ENCODE measurements at regions of chr19 and their contacts with region 1.

Region 1: GRCh38 chr19:13093407-13094105 is 9.1 kb downstream of the LYL1 start:
- DNase-seq: peak; percentile 76 to 82 (median 78)
- H3K4me3 ChIP-seq: no peak overlapping the region
- H3K4me3 Mint-ChIP-seq: peak overlapping the region in 2 of 8 donors; percentile 33 to 64
- H3K27ac ChIP-seq: no peak overlapping the region
- H3K27ac Mint-ChIP-seq: peak overlapping the region in 4 of 7 donors; percentile 24 to 68 (median 36)
- H3K4me1 ChIP-seq: peaks cover 38% of the 10 kb centered on the region
- H3K4me1 Mint-ChIP-seq: peaks cover 11 to 37% (median 18%) of the 10 kb centered on the region in 4 donors
- H3K27me3 ChIP-seq: peaks cover 15% of the 10 kb centered on the region
- H3K27me3 Mint-ChIP-seq: peaks cover 5 to 9% of the 10 kb centered on the region in 2 donors

Region 2: GRCh38 chr19:13033819-13034611 is 59.5 kb before region 1 on chr19:
- CTCF ChIA-PET with region 1: interaction called, 3 read pairs
- POLR2A ChIA-PET with region 1: no interaction called
- intact Hi-C with region 1: loop called (anchors 5 kb)
- DNase-seq: peak in 1 of 5 donors; percentile 25
- H3K4me3 ChIP-seq: no peak overlapping the region
- H3K4me3 Mint-ChIP-seq: no peak overlapping the region
- H3K27ac ChIP-seq: no peak overlapping the region
- H3K27ac Mint-ChIP-seq: no peak overlapping the region
- H3K4me1 ChIP-seq: no peaks in the 10 kb centered on the region
- H3K4me1 Mint-ChIP-seq: peaks cover 0 to 1% (median 0%) of the 10 kb centered on the region in 4 donors
- H3K27me3 ChIP-seq: no peaks in the 10 kb centered on the region
- H3K27me3 Mint-ChIP-seq: peaks cover 0 to 9% of the 10 kb centered on the region in 2 donors

Region 3: DNA sequence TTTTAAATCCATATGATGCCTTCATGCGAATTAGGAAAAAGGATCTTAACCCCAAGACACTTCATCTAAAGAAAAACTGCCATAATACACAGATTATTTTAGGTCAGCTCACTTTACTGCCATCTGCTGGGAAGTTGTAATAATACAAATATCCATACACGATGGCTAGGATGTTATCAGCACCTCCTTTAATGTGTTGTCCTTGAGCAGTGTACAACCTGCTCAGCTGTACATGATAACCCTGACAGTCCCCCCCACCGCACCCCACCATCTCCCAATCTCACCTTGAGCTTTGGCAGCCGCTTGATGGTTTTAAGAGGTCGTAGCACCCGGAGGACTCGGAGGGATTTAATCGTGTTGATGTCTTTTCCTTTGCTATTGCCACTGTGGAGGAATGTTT is 168.9 kb after region 1 on chr19:
- CTCF ChIA-PET with region 1: interaction called, 3 read pairs
- POLR2A ChIA-PET with region 1: no interaction called
- intact Hi-C with region 1: loop called (anchors 1 kb)
- DNase-seq: peak in 4 of 5 donors; percentile 45 to 56 (median 51)
- H3K4me3 ChIP-seq: no peak overlapping the region
- H3K4me3 Mint-ChIP-seq: no peak overlapping the region
- H3K27ac ChIP-seq: no peak overlapping the region
- H3K27ac Mint-ChIP-seq: peak overlapping the region in 3 of 7 donors; percentile 35 to 59 (median 43)
- H3K4me1 ChIP-seq: no peaks in the 10 kb centered on the region
- H3K4me1 Mint-ChIP-seq: peaks cover 2 to 4% (median 3%) of the 10 kb centered on the region in 4 donors
- H3K27me3 ChIP-seq: no peaks in the 10 kb centered on the region
- H3K27me3 Mint-ChIP-seq: peaks cover 7 to 18% of the 10 kb centered on the region in 2 donors

Measured in CD4-positive, alpha-beta memory T cell (primary cell).